ENCODE measurements at regions of chr3 and their contacts with region 1.

Region 1: GRCh38 chr3:50345586-50346235 is at the start of gene ZMYND10:
- DNase-seq: peak; percentile 83
- ATAC-seq: peak; percentile 15
- H3K4me3 Mint-ChIP-seq: peak within 1 kb of the TSS; percentile 52
- H3K27ac Mint-ChIP-seq: no peak within 1 kb of the TSS
- H3K4me1 Mint-ChIP-seq: peaks cover 49% of the 10 kb centered on the region
- H3K27me3 Mint-ChIP-seq: no peaks in the 10 kb centered on the region
- CTCF ChIP-seq: no peak
- total RNA-seq, gene ZMYND10: 1.5 to 2.6 TPM

Region 2: GRCh38 chr3:50292159-50293078 is 53.3 kb before region 1 on chr3 and contains the start of gene IFRD2:
- CTCF ChIA-PET with region 1: no interaction called
- POLR2A ChIA-PET with region 1: no interaction called
- intact Hi-C with region 1: no loop called
- DNase-seq: peak; percentile 98
- ATAC-seq: peak; percentile 98
- H3K4me3 Mint-ChIP-seq: peak within 1 kb of the TSS; percentile 95
- H3K27ac Mint-ChIP-seq: peak within 1 kb of the TSS; percentile 93
- H3K4me1 Mint-ChIP-seq: peaks cover 14% of the 10 kb centered on the region
- H3K27me3 Mint-ChIP-seq: no peaks in the 10 kb centered on the region
- CTCF ChIP-seq: no peak
- total RNA-seq, gene IFRD2: 132 to 133 TPM

Region 3: DNA sequence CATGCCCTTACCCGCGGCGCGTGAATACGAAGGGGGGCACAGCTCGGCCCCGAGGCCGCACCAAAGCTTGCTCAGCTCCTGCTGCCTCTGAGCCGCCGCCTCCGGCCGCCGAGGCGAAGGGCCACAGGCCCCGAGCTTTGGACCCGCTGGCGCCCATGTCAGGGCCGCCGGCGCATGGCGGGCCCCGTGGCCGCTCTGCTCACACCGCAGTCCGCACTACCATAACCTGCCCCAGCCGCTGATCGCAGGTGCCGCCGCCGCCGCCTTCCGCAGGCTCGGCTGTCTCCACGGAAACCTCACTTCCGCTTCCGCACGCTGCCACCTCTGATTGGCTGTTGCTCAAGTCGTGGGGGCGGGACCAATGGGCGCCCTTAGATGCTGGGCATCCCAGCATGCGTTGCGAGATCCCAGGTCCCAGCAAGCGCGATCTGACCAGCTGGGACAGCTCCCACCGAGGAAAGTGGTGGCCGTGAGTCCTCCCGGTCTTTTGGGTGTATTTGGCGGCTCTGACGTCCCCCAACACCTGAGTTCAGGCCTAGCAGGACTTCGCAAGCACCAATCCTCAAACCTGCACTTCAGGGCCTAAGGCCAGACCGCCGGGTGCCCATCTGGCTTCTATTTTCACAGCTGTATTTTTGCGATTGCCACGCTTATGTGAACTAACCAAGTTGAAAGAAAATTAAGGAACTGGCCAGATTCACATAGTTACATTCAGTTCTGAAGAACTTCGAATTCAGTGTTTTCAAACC is 17.6 kb before region 1 on chr3 and contains the start of gene TUSC2:
- CTCF ChIA-PET with region 1: interaction called, 7 read pairs
- POLR2A ChIA-PET with region 1: interaction called, 137 read pairs
- intact Hi-C with region 1: no loop called
- DNase-seq: peak; percentile 99
- ATAC-seq: peak; percentile 94
- H3K4me3 Mint-ChIP-seq: peak within 1 kb of the TSS; percentile 81
- H3K27ac Mint-ChIP-seq: peak within 1 kb of the TSS; percentile 72
- H3K4me1 Mint-ChIP-seq: peaks cover 19% of the 10 kb centered on the region
- H3K27me3 Mint-ChIP-seq: no peaks in the 10 kb centered on the region
- CTCF ChIP-seq: no peak
- total RNA-seq, gene TUSC2: 16.7 to 19.5 TPM

Region 4: DNA sequence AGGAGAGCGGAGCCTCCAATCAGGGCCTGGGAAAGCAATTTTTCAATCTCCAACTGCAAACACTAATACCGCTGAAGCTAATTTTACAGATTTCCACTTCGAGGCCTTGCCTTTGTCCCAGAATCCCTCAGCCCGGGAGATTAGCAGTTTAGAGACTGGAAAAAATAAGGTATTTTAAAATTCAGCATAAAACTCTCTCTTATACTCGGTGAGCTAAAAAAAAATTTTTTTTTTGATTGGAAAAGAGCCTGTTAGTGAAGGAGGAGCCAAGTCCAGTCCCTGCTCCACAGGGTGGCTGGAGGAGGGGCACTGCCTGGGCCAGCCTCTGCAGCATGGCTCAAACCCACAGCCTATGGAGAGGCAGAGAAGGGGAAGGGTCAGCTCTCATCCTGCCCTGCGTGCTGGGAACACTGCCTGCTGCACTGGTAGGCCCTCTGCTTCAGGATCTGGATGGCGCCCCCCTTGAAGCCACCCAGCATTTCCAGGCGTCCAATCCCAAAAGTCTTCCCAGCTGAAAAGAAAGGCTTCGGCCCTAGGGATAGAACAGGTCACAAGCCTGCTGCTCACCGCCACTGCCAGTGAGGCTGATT is 108.9 kb after region 1 on chr3:
- CTCF ChIA-PET with region 1: no interaction called
- POLR2A ChIA-PET with region 1: no interaction called
- intact Hi-C with region 1: no loop called
- DNase-seq: no peak
- ATAC-seq: no peak
- H3K4me3 Mint-ChIP-seq: no peak overlapping the region
- H3K27ac Mint-ChIP-seq: no peak overlapping the region
- H3K4me1 Mint-ChIP-seq: peaks cover 13% of the 10 kb centered on the region
- H3K27me3 Mint-ChIP-seq: no peaks in the 10 kb centered on the region
- CTCF ChIP-seq: no peak

Measured in activated CD8-positive, alpha-beta T cell treated with anti-CD3 and anti-CD28 coated beads for 36 hours (primary cell).